ENCODE measurements at regions of chr3 and their contacts with region 1.

Region 1: DNA sequence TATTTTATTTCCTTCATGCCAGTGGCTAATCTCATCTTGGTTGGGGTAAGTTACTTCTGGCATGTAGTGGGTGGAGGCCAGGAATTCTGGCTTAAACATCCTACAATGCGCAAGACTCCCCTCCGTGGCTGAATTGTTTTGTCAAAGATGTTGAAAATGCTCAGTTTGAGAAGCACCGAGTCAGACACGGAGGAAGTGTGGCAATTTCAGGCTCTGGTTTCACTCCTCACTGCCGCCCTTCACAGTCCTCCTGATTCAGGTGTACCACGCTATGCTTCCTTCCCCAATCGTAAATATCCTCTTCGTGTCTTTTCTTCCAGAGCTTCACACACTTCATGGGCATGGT is 150.7 kb downstream of the OPA1 start:
- DNase-seq: no peak
- ATAC-seq: peak; percentile 56; the same call in 2 of the 3 replicates
- H3K4me3 ChIP-seq: peak overlapping the region; percentile 41 to 74 (median 46)
- H3K27ac ChIP-seq: peak overlapping the region; percentile 97
- H3K4me1 ChIP-seq: peaks cover 40% of the 10 kb centered on the region
- H3K27me3 ChIP-seq: no peaks in the 10 kb centered on the region
- CTCF ChIP-seq: peak; percentile 24; the same call in 1 of the 2 replicates
- EP300 ChIP-seq: no peak
- POLR2A ChIP-seq: 0 out of 4 replicates have a peak, but pooled peaks of 1 of the 2 experiments have one; percentile 46
- RAD21 ChIP-seq: no peak

Region 2: DNA sequence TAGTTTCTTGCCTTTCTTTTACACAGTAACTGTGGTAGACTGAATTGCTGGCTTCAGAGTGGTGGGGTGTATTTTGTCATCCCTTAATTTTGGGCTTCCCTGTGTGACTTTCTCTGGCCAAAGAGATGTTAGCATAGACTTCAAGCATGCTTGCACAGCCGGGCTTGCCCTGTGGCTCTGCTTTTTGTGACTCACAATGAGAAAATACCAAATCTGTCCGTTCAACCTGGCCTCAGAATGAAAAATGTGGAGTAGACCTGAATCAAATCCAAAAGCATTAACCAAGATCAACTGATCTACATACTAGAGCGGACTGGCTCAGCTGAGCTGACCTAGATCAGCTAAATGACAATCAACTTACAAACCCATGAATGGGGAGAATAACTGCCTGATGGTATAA is 451.3 kb before region 1 on chr3:
- CTCF ChIA-PET with region 1: no interaction called
- POLR2A ChIA-PET with region 1: no interaction called
- in situ Hi-C with region 1: no loop called
- intact Hi-C with region 1: no loop called
- DNase-seq: no peak
- ATAC-seq: no peak
- H3K4me3 ChIP-seq: no peak overlapping the region
- H3K27ac ChIP-seq: no peak overlapping the region
- H3K4me1 ChIP-seq: no peaks in the 10 kb centered on the region
- H3K27me3 ChIP-seq: no peaks in the 10 kb centered on the region
- CTCF ChIP-seq: no peak
- EP300 ChIP-seq: no peak
- POLR2A ChIP-seq: no peak
- RAD21 ChIP-seq: no peak

Region 3: DNA sequence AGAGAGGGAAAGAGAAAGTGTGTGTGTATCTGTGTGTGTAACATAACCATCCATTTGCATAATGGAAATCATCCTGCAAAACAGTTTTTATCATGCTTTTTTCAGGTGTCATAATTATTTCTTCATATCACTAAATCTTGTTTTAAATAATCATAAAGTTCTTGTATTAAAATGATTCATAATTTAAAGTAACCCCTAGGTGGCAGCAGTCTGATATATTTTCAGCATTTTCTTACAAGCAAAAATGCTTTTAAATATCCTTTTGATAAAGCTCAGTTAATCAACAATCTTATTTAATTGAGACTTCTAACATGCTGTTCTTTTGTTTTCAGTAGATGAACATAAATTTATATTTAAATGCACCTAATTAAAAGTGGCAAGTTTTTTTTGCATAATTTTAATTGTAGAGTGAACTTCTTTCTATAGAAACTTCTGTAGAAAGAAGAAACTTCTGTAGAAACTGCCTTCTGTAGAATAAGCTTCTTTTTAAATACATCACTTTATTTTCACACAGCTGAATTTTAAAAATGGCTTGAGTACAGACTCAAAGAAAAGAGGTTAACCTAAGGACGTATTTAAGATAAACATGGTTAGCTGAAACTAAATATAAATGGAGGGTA is 78.2 kb before region 1 on chr3:
- CTCF ChIA-PET with region 1: no interaction called
- POLR2A ChIA-PET with region 1: no interaction called
- in situ Hi-C with region 1: no loop called
- intact Hi-C with region 1: loop called (anchors 2 kb)
- DNase-seq: peak; percentile 25
- ATAC-seq: no peak
- H3K4me3 ChIP-seq: no peak overlapping the region
- H3K27ac ChIP-seq: no peak overlapping the region
- H3K4me1 ChIP-seq: peaks cover 14% of the 10 kb centered on the region; the same call in 1 of the 2 replicates
- H3K27me3 ChIP-seq: no peaks in the 10 kb centered on the region
- CTCF ChIP-seq: peak; percentile 34
- EP300 ChIP-seq: no peak
- POLR2A ChIP-seq: no peak
- RAD21 ChIP-seq: no peak

Region 4: DNA sequence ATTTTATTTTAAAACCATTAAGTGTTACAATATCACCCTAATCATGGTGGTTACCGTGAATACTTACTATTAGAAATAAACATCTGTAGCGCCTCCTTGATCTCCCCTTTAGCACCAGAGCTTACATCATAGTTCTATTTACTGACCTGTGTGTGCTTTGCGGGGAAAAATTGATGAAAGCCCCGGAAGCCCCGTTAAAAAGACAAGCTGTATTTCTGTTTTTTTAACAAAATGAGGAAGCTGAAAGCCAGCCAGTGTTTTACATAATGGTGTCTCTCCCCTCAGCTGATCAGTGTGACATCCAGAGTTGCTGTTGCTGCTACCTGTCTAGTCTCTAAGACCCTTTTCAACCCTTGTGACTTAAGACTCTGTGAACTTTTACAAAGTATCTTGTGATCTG is 49.9 kb before region 1 on chr3:
- CTCF ChIA-PET with region 1: no interaction called
- POLR2A ChIA-PET with region 1: no interaction called
- in situ Hi-C with region 1: no loop called
- intact Hi-C with region 1: loop called (anchors 10 kb)
- DNase-seq: peak; percentile 63
- ATAC-seq: peak; percentile 30; the same call in 1 of the 3 replicates
- H3K4me3 ChIP-seq: no peak overlapping the region
- H3K27ac ChIP-seq: peak overlapping the region; percentile 40
- H3K4me1 ChIP-seq: peaks cover 22% of the 10 kb centered on the region
- H3K27me3 ChIP-seq: no peaks in the 10 kb centered on the region
- CTCF ChIP-seq: no peak
- EP300 ChIP-seq: peak in 1 of 2 experiments; percentile 77; a peak in 1 of 4 replicates
- POLR2A ChIP-seq: no peak
- RAD21 ChIP-seq: no peak

Region 5: DNA sequence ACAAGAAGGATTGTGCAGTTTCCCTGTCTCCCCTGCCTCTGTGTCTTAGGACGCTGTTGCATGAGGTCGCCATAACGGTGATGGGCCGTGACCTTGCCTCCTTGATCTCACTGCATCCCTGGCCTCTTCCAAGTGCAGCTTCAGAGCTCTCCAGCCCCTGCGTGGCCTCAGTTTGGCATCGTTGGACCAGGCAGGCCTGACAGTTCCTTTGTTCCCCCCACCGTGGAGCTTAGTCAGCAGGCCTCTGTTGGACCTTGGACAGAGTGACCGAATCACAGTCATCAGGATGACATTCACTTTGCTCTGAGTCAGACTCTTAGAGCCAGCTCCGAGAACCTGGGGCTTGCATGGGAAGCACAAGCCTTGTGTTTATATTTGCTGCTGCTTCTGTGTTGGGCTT is 11.3 kb before region 1 on chr3:
- CTCF ChIA-PET with region 1: no interaction called
- POLR2A ChIA-PET with region 1: interaction called, 44 read pairs
- in situ Hi-C with region 1: no loop called
- intact Hi-C with region 1: loop called (anchors 1 kb)
- DNase-seq: peak; percentile 89
- ATAC-seq: peak; percentile 93
- H3K4me3 ChIP-seq: peak overlapping the region in 1 of 3 experiments; percentile 31; a peak in 1 of 6 replicates
- H3K27ac ChIP-seq: peak overlapping the region; percentile 21
- H3K4me1 ChIP-seq: peaks cover 59% of the 10 kb centered on the region
- H3K27me3 ChIP-seq: peaks cover 0 to 1% of the 10 kb centered on the region in 2 experiments; a peak in 1 of 5 replicates
- CTCF ChIP-seq: no peak
- EP300 ChIP-seq: peak in 1 of 2 experiments; percentile 74; a peak in 2 of 4 replicates
- POLR2A ChIP-seq: no peak
- RAD21 ChIP-seq: no peak

Region 6: GRCh38 chr3:193775421-193776077 is 31.9 kb after region 1 on chr3:
- CTCF ChIA-PET with region 1: no interaction called
- POLR2A ChIA-PET with region 1: interaction called, 3 read pairs
- in situ Hi-C with region 1: no loop called
- intact Hi-C with region 1: loop called (anchors 2 kb)
- DNase-seq: no peak
- ATAC-seq: peak; percentile 46
- H3K4me3 ChIP-seq: no peak overlapping the region
- H3K27ac ChIP-seq: no peak overlapping the region
- H3K4me1 ChIP-seq: peaks cover 79% of the 10 kb centered on the region
- H3K27me3 ChIP-seq: no peaks in the 10 kb centered on the region; a peak in 1 of 5 replicates
- CTCF ChIP-seq: no peak
- EP300 ChIP-seq: no peak
- POLR2A ChIP-seq: no peak
- RAD21 ChIP-seq: no peak